ENCODE measurements at regions of chr9 and their contacts with region 1.

Region 1: DNA sequence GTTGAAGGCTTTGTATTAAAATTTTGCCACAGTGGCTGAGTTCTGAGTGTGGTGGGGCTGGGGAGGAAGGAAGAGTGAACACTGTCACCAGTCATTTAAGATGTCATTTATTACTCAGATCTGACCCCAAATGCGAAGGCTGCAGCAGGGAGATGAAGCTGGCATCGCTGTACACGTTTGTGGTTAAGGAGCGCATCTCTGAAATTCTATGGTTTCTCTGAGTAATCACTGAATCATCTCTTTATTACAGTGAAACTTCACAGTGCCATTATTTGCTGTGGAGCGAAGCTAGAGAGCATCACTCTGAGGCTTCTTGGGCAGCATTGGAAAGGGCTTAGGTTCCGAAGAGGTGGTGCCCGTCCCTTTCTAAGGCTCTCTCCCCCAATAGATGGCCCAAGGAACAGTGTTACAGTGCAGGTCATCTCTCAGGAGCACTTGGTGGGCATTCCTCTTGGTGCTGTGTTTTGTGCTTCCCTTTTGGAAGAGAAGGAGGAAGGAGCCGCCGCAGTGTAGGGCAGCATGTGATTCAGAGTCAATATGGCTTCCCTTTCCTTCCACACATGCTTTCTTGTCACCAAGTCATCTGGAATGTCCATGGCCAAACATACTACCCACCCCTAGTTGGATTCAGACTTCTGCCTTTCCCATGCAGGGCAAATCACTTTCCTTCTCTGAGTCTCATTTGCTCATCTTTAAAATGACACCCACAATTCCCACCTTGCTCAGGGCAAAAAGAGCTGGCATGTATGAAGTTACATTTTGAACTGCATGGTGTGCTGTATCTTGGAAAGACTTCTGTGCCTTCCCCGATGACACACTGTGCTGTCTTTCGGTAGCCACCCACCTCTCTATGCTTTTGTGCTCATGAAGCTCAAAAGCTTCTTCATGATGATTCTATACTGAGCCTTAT is 9.3 kb upstream of the TEX48 start:
- DNase-seq: peak; percentile 52
- H3K4me3 ChIP-seq: no peak overlapping the region; the same call in 1 of the 2 replicates
- CTCF ChIP-seq: no peak

Region 2: DNA sequence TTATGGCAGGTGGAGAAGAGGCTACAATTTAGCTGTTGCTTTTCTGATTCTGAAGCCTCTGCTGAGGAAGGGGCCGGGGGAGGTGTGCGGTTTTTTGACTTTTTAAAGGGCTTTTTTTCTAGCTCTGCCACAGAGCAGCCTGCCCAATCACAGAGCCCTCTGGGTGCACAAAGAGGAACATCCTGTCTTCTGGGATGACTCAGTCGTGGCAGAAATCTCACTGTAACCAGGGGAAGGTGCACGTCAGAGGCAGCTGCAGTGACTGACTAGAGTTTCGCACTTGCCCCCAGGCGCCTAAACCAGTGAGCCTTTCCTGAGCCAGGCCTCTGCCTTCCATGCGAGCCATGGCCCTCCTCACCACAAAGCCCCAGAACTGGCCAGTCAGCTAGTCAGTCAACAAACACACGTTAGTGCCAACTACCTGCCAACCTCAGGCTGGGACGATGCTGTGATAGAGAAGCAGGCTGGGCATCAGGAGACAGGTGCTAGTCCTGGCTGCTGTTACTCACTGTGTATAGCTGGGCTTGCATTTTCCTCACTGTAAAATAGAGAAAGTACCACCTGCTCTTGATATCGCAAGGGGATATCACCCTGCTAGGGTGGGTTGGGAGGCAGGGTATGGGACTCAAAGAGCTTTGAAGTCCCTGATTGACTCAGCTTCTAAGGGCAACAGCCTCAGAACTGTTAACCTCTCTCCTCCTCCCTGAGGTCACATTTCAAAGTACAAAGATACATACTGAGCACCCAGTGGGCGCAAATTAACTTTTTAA is 305.7 kb before region 1 on chr9:
- CTCF ChIA-PET with region 1: no interaction called
- POLR2A ChIA-PET with region 1: no interaction called
- DNase-seq: no peak
- H3K4me3 ChIP-seq: peak overlapping the region; percentile 35
- CTCF ChIP-seq: no peak

Region 3: GRCh38 chr9:114551883-114552685 is 139.2 kb before region 1 on chr9:
- CTCF ChIA-PET with region 1: no interaction called
- POLR2A ChIA-PET with region 1: no interaction called
- DNase-seq: peak; percentile 90
- H3K4me3 ChIP-seq: no peak overlapping the region
- CTCF ChIP-seq: no peak

Region 4: GRCh38 chr9:114738581-114739316 is 47.4 kb after region 1 on chr9:
- CTCF ChIA-PET with region 1: interaction called, 14 read pairs
- POLR2A ChIA-PET with region 1: no interaction called
- DNase-seq: no peak
- H3K4me3 ChIP-seq: no peak overlapping the region
- CTCF ChIP-seq: peak; percentile 63

Measured in AG04449 (cell line).